Activated T-helper 1 cell treated with anti-CD3 and anti-CD28 coated beads, Interleukin-12 subunit alpha, Interleukin-12 subunit beta, Interleukin-2, Interleukin-4 antibody, amounts not matched to agents 30 ng/mL and 10 ng/mL and 1 ng/mL, durations not matched to agents 14 hours and 24 hours and 36 hours (primary cell): ENCODE measurements at regions of chr2 and their contacts with region 1.

Region 1: DNA sequence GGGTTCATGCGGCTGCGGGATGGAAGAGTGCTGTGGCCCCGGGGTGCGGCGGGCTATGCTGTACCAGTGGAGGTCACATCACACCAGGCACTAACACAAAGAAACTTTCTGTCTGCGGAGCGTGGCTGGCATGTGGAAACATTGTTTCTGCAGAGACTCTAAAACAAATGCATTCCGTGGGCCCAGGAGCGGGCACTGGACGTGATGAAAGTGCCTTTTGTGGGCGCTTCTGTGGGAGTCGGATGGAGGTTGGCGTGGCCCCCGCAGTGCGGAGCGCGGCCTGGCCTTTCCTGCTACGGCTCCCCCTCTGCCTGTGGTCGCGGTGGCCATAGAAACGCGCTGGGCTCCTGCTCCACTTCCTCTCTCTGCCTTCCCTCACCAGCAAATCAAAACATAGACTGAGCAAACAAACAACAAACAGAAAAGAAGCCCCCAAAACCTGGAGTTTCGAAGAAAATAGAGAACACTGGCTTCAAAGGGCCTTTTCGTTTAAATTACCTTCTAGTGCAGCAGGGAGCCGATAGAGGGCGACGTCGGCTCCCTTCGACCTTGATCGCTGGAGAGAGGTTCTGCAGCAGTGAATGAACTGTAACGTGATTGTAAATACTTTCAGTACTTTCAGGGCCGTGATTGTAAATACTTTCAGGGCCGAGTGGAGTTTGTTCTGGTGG is 51.4 kb downstream of the KIF5C start:
- DNase-seq: peak; percentile 52
- H3K4me3 Mint-ChIP-seq: peak overlapping the region; percentile 87
- H3K27ac Mint-ChIP-seq: peak overlapping the region; percentile 86
- H3K4me1 Mint-ChIP-seq: peaks cover 26% of the 10 kb centered on the region
- H3K27me3 Mint-ChIP-seq: no peaks in the 10 kb centered on the region

Region 2: DNA sequence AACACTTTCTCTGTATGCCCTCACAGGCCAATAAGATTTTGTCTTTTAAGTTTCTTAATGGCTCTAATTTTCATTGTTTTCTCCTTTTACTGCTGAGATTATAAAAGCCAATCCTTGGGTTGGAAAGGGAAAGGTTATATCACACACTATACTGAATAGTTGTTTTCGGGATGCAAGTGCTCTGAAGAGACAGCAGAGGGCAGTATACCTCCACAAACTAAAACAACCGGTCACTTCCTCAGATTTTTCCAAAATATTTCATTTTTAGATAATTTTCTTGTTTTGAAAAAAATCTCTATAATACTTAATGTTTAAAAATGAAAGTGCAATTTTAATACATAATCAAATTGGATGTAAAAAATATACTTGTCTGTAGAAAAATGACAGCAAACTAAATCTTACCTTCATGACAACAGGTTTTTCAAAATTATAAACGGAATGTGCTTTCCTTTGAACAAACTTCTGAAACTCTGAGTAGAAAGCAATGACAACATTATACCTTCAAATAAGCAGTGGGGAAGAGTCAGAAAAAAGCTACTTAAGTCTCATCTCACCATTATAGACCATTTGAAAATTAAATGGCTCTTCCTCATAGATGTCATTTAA is 988.6 kb before region 1 on chr2:
- intact Hi-C with region 1: loop called (anchors 2 kb)
- DNase-seq: no peak
- H3K4me3 Mint-ChIP-seq: no peak overlapping the region
- H3K27ac Mint-ChIP-seq: no peak overlapping the region
- H3K4me1 Mint-ChIP-seq: no peaks in the 10 kb centered on the region
- H3K27me3 Mint-ChIP-seq: no peaks in the 10 kb centered on the region

Region 3: GRCh38 chr2:148020111-148021058 is 906.0 kb before region 1 on chr2 and contains the start of gene ORC4:
- intact Hi-C with region 1: loop called (anchors 5 kb)
- DNase-seq: peak; percentile 95
- H3K4me3 Mint-ChIP-seq: peak within 1 kb of the TSS; percentile 98
- H3K27ac Mint-ChIP-seq: peak within 1 kb of the TSS; percentile 95
- H3K4me1 Mint-ChIP-seq: peaks cover 40% of the 10 kb centered on the region
- H3K27me3 Mint-ChIP-seq: no peaks in the 10 kb centered on the region
- total RNA-seq, gene ORC4: 29.2 and 34.2 TPM in 2 replicates

Region 4: GRCh38 chr2:148132400-148132799 is 794.0 kb before region 1 on chr2:
- intact Hi-C with region 1: no loop called
- DNase-seq: no peak
- H3K4me3 Mint-ChIP-seq: no peak overlapping the region
- H3K27ac Mint-ChIP-seq: no peak overlapping the region
- H3K4me1 Mint-ChIP-seq: no peaks in the 10 kb centered on the region
- H3K27me3 Mint-ChIP-seq: no peaks in the 10 kb centered on the region

Region 5: DNA sequence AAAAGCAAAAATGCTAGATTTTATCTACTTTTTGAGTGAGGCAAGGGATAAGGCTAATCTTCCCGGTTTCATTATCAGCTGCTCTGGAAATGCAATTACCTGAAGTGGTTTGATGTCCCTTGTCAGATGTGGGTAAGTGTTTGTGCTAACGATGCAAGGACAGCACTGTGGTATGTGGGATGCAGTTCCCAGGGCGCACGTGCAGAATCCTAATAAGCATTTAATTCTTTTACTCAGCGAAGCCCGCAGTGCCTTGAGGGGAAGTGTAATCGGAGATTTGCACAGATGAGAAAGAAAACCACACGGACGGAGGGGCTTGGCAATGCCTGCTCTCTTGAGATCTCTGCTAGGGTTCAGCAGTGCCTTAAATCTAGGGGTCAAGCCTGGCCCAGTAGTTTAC is 295.5 kb after region 1 on chr2:
- intact Hi-C with region 1: no loop called
- DNase-seq: no peak
- H3K4me3 Mint-ChIP-seq: no peak overlapping the region
- H3K27ac Mint-ChIP-seq: no peak overlapping the region
- H3K4me1 Mint-ChIP-seq: no peaks in the 10 kb centered on the region
- H3K27me3 Mint-ChIP-seq: peaks cover 5% of the 10 kb centered on the region